Naive thymus-derived CD4-positive, alpha-beta T cell (primary cell): ENCODE measurements at regions of chr4 and their contacts with region 1.

Region 1: GRCh38 chr4:101730291-101731117 is 60.0 kb upstream of the BANK1 start:
- DNase-seq: peak in 8 of 9 donors; percentile 8 to 36 (median 27)
- ATAC-seq: peak; percentile 80
- H3K4me3 ChIP-seq: no peak overlapping the region
- H3K4me3 Mint-ChIP-seq: no peak overlapping the region
- H3K27ac ChIP-seq: no peak overlapping the region
- H3K27ac Mint-ChIP-seq: no peak overlapping the region
- H3K4me1 ChIP-seq: no peaks in the 10 kb centered on the region
- H3K4me1 Mint-ChIP-seq: peaks cover 0 to 5% (median 0%) of the 10 kb centered on the region in 7 donors
- H3K27me3 ChIP-seq: no peaks in the 10 kb centered on the region
- H3K27me3 Mint-ChIP-seq: peaks cover 6 to 12% (median 9%) of the 10 kb centered on the region in 5 donors

Region 2: GRCh38 chr4:100421361-100421978 is 1309.0 kb before region 1 on chr4:
- CTCF ChIA-PET with region 1: no interaction called
- POLR2A ChIA-PET with region 1: no interaction called
- intact Hi-C with region 1: loop called (anchors 1 kb)
- DNase-seq: peak in 3 of 9 donors; percentile 1 to 10 (median 1)
- ATAC-seq: no peak
- H3K4me3 ChIP-seq: no peak overlapping the region
- H3K4me3 Mint-ChIP-seq: no peak overlapping the region
- H3K27ac ChIP-seq: no peak overlapping the region
- H3K27ac Mint-ChIP-seq: no peak overlapping the region
- H3K4me1 ChIP-seq: no peaks in the 10 kb centered on the region
- H3K4me1 Mint-ChIP-seq: peaks cover 0 to 4% (median 0%) of the 10 kb centered on the region in 7 donors
- H3K27me3 ChIP-seq: no peaks in the 10 kb centered on the region
- H3K27me3 Mint-ChIP-seq: peaks cover 0 to 9% (median 0%) of the 10 kb centered on the region in 5 donors

Region 3: DNA sequence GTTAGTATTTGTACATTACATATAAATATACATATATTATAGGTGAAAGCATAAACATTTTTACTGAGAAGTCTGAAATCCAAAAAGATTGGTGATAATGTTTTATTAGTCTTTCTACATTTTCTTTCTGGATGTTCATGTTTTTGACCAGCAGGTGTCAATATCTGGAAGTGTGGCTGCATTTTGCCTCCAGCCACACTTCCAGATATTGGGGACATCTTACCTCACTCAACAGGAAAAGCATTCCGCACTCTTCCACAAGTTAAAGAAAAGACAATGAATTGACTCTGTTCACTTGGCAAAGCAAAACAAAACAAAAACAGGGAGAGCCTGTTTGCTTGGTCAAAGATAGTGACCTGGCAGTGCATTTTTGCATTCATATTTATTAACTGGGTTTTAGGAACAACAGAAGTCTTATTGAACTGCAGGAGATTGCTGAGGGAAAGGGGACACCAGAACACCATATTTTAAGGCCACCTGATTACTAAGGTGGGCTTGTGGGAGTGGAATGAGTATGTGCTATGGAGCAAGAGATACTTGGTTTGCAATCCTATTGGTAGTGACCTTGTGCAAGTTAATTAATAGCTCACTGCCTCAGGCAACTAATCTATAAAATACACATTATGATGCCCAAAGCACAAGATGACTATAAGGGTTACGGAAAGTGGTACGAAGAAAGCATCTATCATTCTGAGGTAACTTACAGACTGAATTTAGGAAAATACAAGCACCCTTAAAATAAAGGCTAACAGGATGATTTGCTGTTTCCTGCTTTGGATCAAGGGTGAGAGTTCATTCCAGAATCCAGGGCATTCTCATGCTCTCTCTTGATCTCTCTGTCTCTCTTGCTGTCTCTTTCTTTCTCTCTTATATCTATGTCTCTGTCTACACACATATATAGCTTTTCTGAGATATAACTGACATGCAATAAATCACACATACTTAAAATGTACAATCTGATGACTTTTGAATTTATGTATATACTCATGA is 822.7 kb before region 1 on chr4:
- CTCF ChIA-PET with region 1: no interaction called
- POLR2A ChIA-PET with region 1: no interaction called
- intact Hi-C with region 1: loop called in 1 of 2 experiments (anchors 1 kb)
- DNase-seq: no peak
- ATAC-seq: no peak
- H3K4me3 ChIP-seq: no peak overlapping the region
- H3K4me3 Mint-ChIP-seq: no peak overlapping the region
- H3K27ac ChIP-seq: no peak overlapping the region
- H3K27ac Mint-ChIP-seq: no peak overlapping the region
- H3K4me1 ChIP-seq: no peaks in the 10 kb centered on the region
- H3K4me1 Mint-ChIP-seq: no peaks in the 10 kb centered on the region
- H3K27me3 ChIP-seq: no peaks in the 10 kb centered on the region
- H3K27me3 Mint-ChIP-seq: peaks cover 0 to 38% (median 8%) of the 10 kb centered on the region in 5 donors

Region 4: DNA sequence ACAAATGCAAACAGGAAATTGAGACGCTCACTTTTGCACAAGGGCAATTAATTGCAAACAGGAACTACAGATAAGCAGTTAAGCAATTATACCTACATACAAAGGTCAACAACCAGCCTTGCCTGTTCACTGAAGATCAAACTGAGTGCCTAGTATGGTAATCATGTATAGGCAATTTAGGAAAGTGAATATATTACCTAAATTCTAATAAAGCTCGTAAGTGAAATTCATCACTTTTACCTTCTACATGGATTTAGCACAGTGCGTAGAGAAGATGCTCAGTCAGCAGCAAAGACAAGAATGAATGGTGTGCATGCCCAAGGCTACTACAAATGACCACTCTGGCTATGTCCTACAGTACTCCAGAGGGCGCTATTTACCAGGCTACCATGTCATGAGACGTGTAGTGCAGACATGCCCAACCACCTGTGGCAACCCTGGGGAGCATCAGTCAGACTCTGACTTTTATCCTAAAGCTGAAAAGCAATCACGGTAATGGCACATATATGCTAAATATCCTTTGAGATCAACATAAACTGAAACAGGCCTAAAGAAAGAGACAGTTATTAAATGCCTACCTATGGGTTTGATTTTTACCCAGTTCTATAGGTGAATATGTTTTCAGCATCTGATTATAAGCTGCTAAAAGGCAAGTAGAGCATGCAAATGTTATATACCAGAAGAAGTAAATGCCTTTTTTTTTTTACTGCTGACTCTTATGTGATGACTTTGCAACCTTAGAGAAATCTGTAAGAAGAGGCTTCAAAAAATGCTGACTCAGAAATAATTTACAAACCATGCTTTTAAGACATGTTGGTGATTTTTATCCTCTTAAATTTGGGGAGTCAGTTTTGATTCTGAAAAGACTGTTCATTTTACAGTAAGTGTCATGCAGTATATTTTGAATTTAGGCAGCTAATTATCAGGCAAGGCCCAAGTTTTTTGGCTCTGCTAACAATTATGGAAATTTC is 561.2 kb before region 1 on chr4:
- CTCF ChIA-PET with region 1: interaction called, 24 read pairs
- POLR2A ChIA-PET with region 1: no interaction called
- intact Hi-C with region 1: loop called in 1 of 2 experiments (anchors 1 kb)
- DNase-seq: peak; percentile 9 to 64 (median 54)
- ATAC-seq: peak; percentile 96
- H3K4me3 ChIP-seq: no peak overlapping the region
- H3K4me3 Mint-ChIP-seq: no peak overlapping the region
- H3K27ac ChIP-seq: no peak overlapping the region
- H3K27ac Mint-ChIP-seq: no peak overlapping the region
- H3K4me1 ChIP-seq: no peaks in the 10 kb centered on the region
- H3K4me1 Mint-ChIP-seq: peaks cover 0 to 6% (median 3%) of the 10 kb centered on the region in 7 donors
- H3K27me3 ChIP-seq: no peaks in the 10 kb centered on the region
- H3K27me3 Mint-ChIP-seq: no peaks in the 10 kb centered on the region

Region 5: GRCh38 chr4:101835121-101835904 is 104.8 kb after region 1 on chr4:
- CTCF ChIA-PET with region 1: no interaction called
- POLR2A ChIA-PET with region 1: no interaction called
- intact Hi-C with region 1: no loop called
- DNase-seq: no peak
- ATAC-seq: peak; percentile 47
- H3K4me3 ChIP-seq: no peak overlapping the region
- H3K4me3 Mint-ChIP-seq: no peak overlapping the region
- H3K27ac ChIP-seq: no peak overlapping the region
- H3K27ac Mint-ChIP-seq: no peak overlapping the region
- H3K4me1 ChIP-seq: no peaks in the 10 kb centered on the region
- H3K4me1 Mint-ChIP-seq: peaks cover 0 to 4% (median 0%) of the 10 kb centered on the region in 7 donors
- H3K27me3 ChIP-seq: no peaks in the 10 kb centered on the region
- H3K27me3 Mint-ChIP-seq: peaks cover 4 to 30% (median 11%) of the 10 kb centered on the region in 5 donors